Activated CD8-positive, alpha-beta memory T cell treated with anti-CD3 and anti-CD28 coated beads, Interleukin-2, amount 10 ng/mL, durations not matched to agents 7 days and 5 days (primary cell): ENCODE measurements at regions of chr2 and their contacts with region 1.

Region 1: DNA sequence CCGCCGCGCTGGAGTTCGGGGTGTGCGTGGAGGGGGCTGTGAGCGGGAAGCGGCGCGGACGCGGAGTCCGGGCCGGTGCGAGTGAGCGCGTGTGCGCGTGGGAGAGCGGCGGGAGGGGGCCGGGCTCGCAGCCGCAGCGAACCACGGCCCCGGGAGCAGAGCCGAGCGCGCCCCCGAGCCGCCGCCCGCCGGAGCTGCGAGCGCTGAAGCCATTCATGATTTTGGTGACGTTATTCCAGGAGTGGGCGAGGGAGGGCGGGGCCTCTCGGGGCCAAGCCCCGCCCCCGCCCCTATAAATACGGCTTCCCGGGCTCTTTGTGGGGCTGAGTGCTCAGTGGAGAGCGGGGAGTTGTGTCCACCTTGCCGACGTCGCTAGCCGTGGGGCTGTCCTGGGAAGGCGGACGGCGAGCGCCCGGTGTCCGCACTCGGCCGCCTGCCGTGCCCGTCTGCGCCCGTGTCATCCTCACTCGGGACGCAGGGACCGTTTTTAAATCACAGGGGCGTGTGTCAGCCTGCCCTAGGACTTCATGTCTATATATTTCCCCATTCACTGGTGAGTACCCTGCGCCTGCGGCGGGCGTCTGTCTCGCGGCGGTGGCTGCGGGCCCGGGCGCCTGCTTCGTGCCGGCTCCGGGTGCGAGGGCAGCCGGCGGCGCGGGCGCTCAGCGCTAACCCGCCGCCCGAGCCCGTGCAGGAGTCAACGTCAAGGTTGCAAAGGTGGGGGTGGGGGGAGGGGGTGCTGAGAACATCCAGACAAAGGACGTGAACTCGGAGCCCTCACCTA is at the start of gene LBH:
- DNase-seq: peak; percentile 88
- ATAC-seq: peak; percentile 48
- H3K4me3 Mint-ChIP-seq: peak within 1 kb of the TSS; percentile 73
- H3K27ac Mint-ChIP-seq: peak within 1 kb of the TSS; percentile 78
- H3K4me1 Mint-ChIP-seq: peaks cover 60% of the 10 kb centered on the region
- H3K27me3 Mint-ChIP-seq: peaks cover 12% of the 10 kb centered on the region
- total RNA-seq, gene LBH: 68.5 to 71.5 TPM

Region 2: GRCh38 chr2:30336978-30337841 is 105.8 kb after region 1 on chr2:
- CTCF ChIA-PET with region 1: interaction called, 23 read pairs
- DNase-seq: peak; percentile 79
- ATAC-seq: peak; percentile 93
- H3K4me3 Mint-ChIP-seq: peak overlapping the region; percentile 76
- H3K27ac Mint-ChIP-seq: peak overlapping the region; percentile 96
- H3K4me1 Mint-ChIP-seq: peaks cover 65% of the 10 kb centered on the region
- H3K27me3 Mint-ChIP-seq: no peaks in the 10 kb centered on the region